ENCODE measurements at regions of chr7 and their contacts with region 1.

Region 1: DNA sequence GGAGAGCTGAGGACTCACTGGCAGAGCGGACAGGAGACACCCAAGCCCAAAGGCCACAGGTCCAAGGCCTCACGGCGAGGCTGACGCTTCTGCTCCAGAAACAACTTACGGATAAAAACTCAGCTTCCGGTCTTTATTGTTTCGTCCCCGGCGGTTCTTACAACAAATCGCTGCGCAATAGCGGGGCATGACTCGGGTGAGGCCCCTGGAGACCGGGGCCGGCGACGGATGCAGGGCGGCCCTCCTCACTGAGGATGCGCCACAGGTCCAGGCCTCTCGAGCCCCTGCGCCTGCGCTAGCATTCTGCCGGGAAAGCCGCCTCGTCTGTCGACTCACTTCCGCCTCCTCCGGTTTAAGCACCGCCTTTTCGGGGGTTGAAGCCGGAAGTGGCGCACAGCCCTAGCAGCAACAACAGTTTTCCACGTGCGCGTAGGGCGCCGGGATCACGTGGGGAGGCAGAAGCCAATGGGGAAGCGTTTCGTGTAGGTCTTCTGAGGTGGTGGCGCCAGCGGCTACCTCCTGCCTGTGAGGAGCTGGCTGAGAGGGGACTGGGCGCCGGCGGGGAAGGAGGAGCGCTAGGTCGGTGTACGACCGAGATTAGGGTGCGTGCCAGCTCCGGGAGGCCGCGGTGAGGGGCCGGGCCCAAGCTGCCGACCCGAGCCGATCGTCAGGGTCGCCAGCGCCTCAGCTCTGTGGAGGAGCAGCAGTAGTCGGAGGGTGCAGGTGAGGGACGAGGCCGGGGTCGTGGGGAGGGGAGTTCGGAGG is at the starts of genes DNAJB9 and THAP5:
- DNase-seq: peak; percentile 99 to 100 (median 100)
- H3K4me3 ChIP-seq: peak within 1 kb of the TSS; percentile 77 to 97
- H3K4me3 Mint-ChIP-seq: peak within 1 kb of the TSS; percentile 91 to 99 (median 96)
- H3K27ac ChIP-seq: peak within 1 kb of the TSS; percentile 100
- H3K27ac Mint-ChIP-seq: peak within 1 kb of the TSS; percentile 96 to 100 (median 99)
- H3K4me1 ChIP-seq: peaks cover 59% of the 10 kb centered on the region
- H3K4me1 Mint-ChIP-seq: peaks cover 31 to 82% (median 51%) of the 10 kb centered on the region in 4 donors
- H3K27me3 ChIP-seq: no peaks in the 10 kb centered on the region
- H3K27me3 Mint-ChIP-seq: no peaks in the 10 kb centered on the region
- total RNA-seq, gene DNAJB9: 43.6 to 49.3 TPM
- total RNA-seq, gene THAP5: 45.9 to 52.8 TPM

Region 2: GRCh38 chr7:108263425-108263824 is 306.1 kb before region 1 on chr7:
- CTCF ChIA-PET with region 1: no interaction called
- POLR2A ChIA-PET with region 1: no interaction called
- intact Hi-C with region 1: no loop called
- DNase-seq: no peak
- H3K4me3 ChIP-seq: no peak overlapping the region
- H3K4me3 Mint-ChIP-seq: no peak overlapping the region
- H3K27ac ChIP-seq: no peak overlapping the region
- H3K27ac Mint-ChIP-seq: no peak overlapping the region
- H3K4me1 ChIP-seq: no peaks in the 10 kb centered on the region
- H3K4me1 Mint-ChIP-seq: no peaks in the 10 kb centered on the region
- H3K27me3 ChIP-seq: no peaks in the 10 kb centered on the region
- H3K27me3 Mint-ChIP-seq: peaks cover 0 to 2% of the 10 kb centered on the region in 2 donors

Region 3: DNA sequence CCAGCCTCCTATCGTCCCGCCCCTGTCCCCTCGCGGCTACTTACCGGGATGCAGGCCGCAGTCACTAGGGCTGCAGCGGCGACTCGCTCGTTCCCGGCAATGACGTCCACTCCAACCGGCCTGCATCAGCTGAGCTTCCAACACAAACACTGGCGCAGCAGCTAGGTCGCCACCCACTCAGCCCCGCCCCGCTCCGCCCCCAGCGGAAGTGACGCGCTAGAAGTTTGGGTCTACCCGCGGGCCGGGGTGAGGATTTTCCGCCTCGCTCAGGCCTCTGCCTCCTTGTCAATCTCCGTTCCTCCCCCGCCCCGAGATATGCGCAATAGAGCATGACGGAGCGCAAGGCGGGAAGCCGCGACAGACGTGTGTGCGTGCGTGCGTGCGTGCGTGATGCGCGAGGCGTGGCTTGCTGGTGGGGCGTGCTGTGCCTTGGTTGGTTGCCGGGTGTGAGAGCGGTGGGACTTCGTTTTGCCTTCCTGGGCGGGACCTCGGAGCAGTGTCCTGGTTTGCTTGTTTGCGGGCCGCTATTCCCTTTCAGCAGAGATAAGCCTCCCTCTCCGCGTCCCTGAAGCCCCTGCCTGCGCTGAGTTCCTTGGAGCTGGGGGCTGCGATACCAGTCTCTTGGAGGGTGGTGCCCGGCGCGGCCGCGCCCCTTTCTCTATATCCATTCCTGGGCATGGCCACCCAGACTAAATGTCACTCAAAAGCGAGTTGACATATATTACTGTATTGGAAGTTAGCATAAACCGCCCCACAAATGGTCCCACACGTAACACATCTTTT is 43.4 kb before region 1 on chr7 and contains the start of gene PNPLA8:
- CTCF ChIA-PET with region 1: interaction called, 7 read pairs
- POLR2A ChIA-PET with region 1: interaction called, 138 read pairs
- intact Hi-C with region 1: loop called (anchors 1 kb)
- DNase-seq: peak; percentile 100
- H3K4me3 ChIP-seq: peak within 1 kb of the TSS; percentile 52 to 81
- H3K4me3 Mint-ChIP-seq: peak within 1 kb of the TSS; percentile 90 to 98 (median 96)
- H3K27ac ChIP-seq: peak within 1 kb of the TSS; percentile 98
- H3K27ac Mint-ChIP-seq: peak within 1 kb of the TSS; percentile 99 to 100 (median 100)
- H3K4me1 ChIP-seq: peaks cover 38% of the 10 kb centered on the region
- H3K4me1 Mint-ChIP-seq: peaks cover 30 to 58% (median 39%) of the 10 kb centered on the region in 4 donors
- H3K27me3 ChIP-seq: no peaks in the 10 kb centered on the region
- H3K27me3 Mint-ChIP-seq: no peaks in the 10 kb centered on the region
- total RNA-seq, gene PNPLA8: 28.0 to 28.9 TPM

Measured in CD4-positive, alpha-beta memory T cell (primary cell).